Naive thymus-derived CD4-positive, alpha-beta T cell (primary cell): ENCODE measurements at regions of chr20 and their contacts with region 1.

Region 1: GRCh38 chr20:50546729-50547314 is 36.6 kb downstream of the PTPN1 start:
- DNase-seq: peak in 1 of 9 donors; percentile 7
- ATAC-seq: peak; percentile 64
- H3K4me3 ChIP-seq: no peak overlapping the region
- H3K4me3 Mint-ChIP-seq: peak overlapping the region; percentile 55 to 87 (median 72)
- H3K27ac ChIP-seq: peak overlapping the region; percentile 20
- H3K27ac Mint-ChIP-seq: peak overlapping the region; percentile 16 to 90 (median 86)
- H3K4me1 ChIP-seq: peaks cover 28 to 34% of the 10 kb centered on the region in 2 donors
- H3K4me1 Mint-ChIP-seq: peaks cover 59 to 76% (median 71%) of the 10 kb centered on the region in 7 donors
- H3K27me3 ChIP-seq: no peaks in the 10 kb centered on the region
- H3K27me3 Mint-ChIP-seq: no peaks in the 10 kb centered on the region

Region 2: DNA sequence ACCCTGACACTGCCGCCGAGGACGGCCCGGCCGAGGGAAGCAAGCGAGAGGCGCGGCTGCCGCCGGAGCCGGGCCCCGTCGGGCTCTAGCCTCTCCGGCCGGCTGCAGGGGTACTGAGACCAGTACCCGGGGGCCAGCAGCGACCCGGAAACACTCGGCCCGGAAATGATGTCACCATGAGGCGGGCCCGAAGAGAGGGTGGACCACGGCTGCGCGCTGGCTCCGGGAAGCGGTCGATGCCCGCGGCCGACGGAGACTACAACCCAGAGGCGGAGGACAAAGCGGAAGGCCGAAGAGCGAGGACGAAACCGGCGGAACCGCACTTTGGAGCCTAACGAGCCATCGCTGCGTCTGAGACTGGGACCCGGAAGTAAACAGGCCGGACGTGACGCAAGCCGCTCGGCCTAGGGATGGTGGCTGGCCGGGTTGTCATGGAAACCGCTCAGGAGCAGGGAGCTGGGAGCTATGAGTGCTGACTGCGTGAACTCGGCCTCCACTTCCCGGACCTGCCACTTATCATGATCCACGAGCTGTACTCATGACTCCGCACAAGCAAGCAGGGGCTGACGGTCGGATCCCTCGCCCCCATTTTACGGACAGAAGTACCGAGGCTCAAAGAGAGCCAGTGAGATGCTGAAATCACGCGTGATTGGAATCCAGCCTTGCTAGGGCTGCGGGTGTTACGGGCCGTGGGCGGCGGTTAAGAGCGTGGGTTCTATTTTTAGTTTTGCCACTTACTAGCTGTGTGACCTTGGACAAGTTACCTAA is 631.3 kb before region 1 on chr20 and contains the start of gene SPATA2:
- CTCF ChIA-PET with region 1: no interaction called
- POLR2A ChIA-PET with region 1: interaction called, 12 read pairs
- intact Hi-C with region 1: no loop called
- DNase-seq: peak; percentile 87 to 99 (median 93)
- ATAC-seq: peak; percentile 88
- H3K4me3 ChIP-seq: peak within 1 kb of the TSS; percentile 93
- H3K4me3 Mint-ChIP-seq: peak within 1 kb of the TSS; percentile 96 to 99 (median 97)
- H3K27ac ChIP-seq: peak within 1 kb of the TSS; percentile 100
- H3K27ac Mint-ChIP-seq: peak within 1 kb of the TSS; percentile 97 to 100 (median 99)
- H3K4me1 ChIP-seq: peaks cover 11 to 16% of the 10 kb centered on the region in 2 donors
- H3K4me1 Mint-ChIP-seq: peaks cover 25 to 48% (median 36%) of the 10 kb centered on the region in 7 donors
- H3K27me3 ChIP-seq: no peaks in the 10 kb centered on the region
- H3K27me3 Mint-ChIP-seq: no peaks in the 10 kb centered on the region
- total RNA-seq, gene SPATA2: 9.0 to 18.4 (median 10.0) TPM

Region 3: DNA sequence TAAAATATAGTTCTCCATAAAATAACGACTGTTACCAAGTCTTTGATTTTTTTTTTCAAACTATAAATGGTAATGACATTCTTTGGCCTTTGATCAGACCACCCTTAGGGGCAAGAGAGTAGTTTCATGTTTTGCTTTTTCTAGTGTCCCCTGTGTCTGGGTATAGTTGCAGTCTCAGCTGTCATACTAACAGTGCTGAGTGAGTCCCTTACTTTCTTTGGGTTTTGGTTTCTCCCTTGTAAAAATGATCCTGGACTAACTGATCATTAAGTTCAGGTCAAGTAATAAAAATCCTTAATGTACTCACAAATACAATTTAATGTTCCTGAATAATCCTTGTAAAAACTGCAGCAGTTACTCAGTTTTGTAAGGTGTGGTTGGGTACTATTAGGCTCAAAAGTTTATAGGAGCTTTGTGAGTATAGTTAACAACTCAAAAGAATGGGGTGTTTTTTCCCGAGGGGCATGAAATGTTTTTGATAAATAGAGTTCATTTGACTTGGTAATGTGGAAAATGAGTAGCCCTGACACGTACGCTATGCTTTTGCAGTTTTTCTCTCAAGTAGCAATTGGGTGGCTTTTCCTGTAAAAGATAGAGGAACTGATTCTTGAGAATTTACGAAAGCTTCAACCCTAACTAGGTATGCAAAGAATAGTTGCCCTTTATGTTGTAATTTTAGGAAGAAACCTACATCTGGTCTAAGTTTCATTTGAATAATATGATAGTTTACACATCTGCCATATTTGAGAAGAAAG is 30.5 kb before region 1 on chr20:
- CTCF ChIA-PET with region 1: interaction called, 3 read pairs
- POLR2A ChIA-PET with region 1: interaction called, 17 read pairs
- intact Hi-C with region 1: loop called (anchors 1 to 2 kb)
- DNase-seq: no peak
- ATAC-seq: peak; percentile 19
- H3K4me3 ChIP-seq: peak overlapping the region; percentile 4
- H3K4me3 Mint-ChIP-seq: peak overlapping the region; percentile 8 to 99 (median 76)
- H3K27ac ChIP-seq: peak overlapping the region; percentile 62
- H3K27ac Mint-ChIP-seq: peak overlapping the region; percentile 44 to 98 (median 88)
- H3K4me1 ChIP-seq: peaks cover 77 to 85% of the 10 kb centered on the region in 2 donors
- H3K4me1 Mint-ChIP-seq: peaks cover 77 to 100% (median 99%) of the 10 kb centered on the region in 7 donors
- H3K27me3 ChIP-seq: no peaks in the 10 kb centered on the region
- H3K27me3 Mint-ChIP-seq: no peaks in the 10 kb centered on the region

Region 4: DNA sequence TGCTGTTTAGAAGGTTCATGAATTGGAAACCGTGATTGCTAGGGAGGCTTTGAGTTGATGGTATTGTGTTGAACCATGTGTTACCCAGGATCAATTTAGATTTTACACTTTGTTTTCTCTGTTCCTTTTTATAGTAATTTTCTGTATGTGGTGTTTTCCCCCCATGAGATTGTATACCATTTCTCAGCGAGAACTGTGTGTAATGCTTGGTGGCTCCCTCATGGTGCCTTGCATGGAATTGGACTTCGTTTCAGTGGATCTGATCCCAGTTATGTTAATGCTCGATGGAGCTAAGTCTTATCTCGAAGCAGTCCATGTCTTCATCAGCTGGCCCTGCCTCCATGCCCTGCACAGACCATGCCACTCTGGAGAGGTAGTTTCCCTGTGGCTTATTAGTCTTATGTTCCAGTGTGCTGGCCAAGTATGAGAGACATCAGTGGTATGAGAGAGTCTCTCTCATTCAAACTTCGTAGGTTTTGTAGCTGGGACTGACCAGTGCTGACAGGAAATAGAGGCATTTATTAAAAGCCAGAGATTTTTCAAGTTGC is 17.9 kb before region 1 on chr20:
- CTCF ChIA-PET with region 1: interaction called, 3 read pairs
- POLR2A ChIA-PET with region 1: interaction called, 5 read pairs
- intact Hi-C with region 1: loop called (anchors 2 kb)
- DNase-seq: no peak
- ATAC-seq: no peak
- H3K4me3 ChIP-seq: no peak overlapping the region
- H3K4me3 Mint-ChIP-seq: peak overlapping the region in 8 of 10 donors; percentile 0 to 61 (median 24)
- H3K27ac ChIP-seq: no peak overlapping the region
- H3K27ac Mint-ChIP-seq: peak overlapping the region in 2 of 9 donors; percentile 53 to 68
- H3K4me1 ChIP-seq: peaks cover 29 to 37% of the 10 kb centered on the region in 2 donors
- H3K4me1 Mint-ChIP-seq: peaks cover 29 to 49% (median 36%) of the 10 kb centered on the region in 7 donors
- H3K27me3 ChIP-seq: no peaks in the 10 kb centered on the region
- H3K27me3 Mint-ChIP-seq: no peaks in the 10 kb centered on the region

Region 5: GRCh38 chr20:50569864-50570836 is 23.3 kb after region 1 on chr20:
- CTCF ChIA-PET with region 1: interaction called, 5 read pairs
- POLR2A ChIA-PET with region 1: no interaction called
- intact Hi-C with region 1: loop called in 1 of 2 experiments (anchors 1 kb)
- DNase-seq: peak in 7 of 9 donors; percentile 18 to 49 (median 45)
- ATAC-seq: peak; percentile 79
- H3K4me3 ChIP-seq: no peak overlapping the region
- H3K4me3 Mint-ChIP-seq: peak overlapping the region; percentile 5 to 73 (median 45)
- H3K27ac ChIP-seq: peak overlapping the region; percentile 36
- H3K27ac Mint-ChIP-seq: peak overlapping the region; percentile 46 to 91 (median 83)
- H3K4me1 ChIP-seq: peaks cover 7 to 19% of the 10 kb centered on the region in 2 donors
- H3K4me1 Mint-ChIP-seq: peaks cover 39 to 75% (median 70%) of the 10 kb centered on the region in 7 donors
- H3K27me3 ChIP-seq: no peaks in the 10 kb centered on the region
- H3K27me3 Mint-ChIP-seq: no peaks in the 10 kb centered on the region